Spleen (tissue), 13 donors: ENCODE measurements at regions of chr5 and their contacts with region 1.

Region 1: GRCh38 chr5:134101686-134102439 is 12.6 kb upstream of the TCF7 start:
- DNase-seq: peak; percentile 94
- H3K4me3 ChIP-seq: no peak overlapping the region
- H3K27ac ChIP-seq: peak overlapping the region in 4 of 8 donors; percentile 69 to 84 (median 80)
- H3K4me1 ChIP-seq: peaks cover 27 to 77% (median 52%) of the 10 kb centered on the region in 6 donors
- H3K27me3 ChIP-seq: no peaks in the 10 kb centered on the region
- CTCF ChIP-seq: peak; percentile 62 to 93 (median 88)
- POLR2A ChIP-seq: no peak

Region 2: DNA sequence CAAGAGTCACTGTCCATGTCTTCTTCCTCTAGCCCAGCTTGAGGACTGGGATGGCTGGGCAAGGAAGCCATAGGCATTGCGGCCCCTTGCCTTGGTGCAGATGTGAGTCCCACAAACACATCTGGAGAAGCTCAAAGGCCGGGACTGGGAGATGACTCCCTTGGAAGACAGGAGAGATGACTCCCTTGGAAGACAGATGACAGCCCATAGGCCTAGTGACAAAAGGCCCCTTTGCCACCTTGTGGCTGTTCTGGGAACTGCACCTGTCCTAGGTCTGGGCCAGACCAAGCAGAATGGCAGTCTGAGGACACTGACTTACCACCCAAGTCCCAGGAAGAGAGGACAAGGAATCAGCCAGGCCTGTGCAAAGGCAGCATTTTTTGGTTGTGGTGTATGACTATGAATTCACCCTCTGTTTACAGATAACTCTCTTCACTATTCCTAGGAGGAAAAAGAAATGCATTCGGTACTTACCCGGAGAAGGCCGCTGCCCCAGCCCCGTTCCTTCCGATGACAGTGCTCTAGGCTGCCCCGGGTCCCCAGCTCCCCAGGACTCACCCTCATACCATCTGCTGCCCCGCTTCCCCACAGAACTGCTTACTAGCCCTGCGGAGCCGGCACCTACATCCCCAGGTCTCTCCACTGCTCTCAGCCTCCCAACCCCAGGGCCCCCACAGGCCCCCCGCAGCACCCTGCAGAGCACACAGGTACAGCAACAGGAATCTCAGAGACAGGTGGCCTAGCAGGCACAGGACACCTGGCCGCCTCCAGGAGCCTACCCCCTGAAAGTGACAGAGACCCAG is 44.1 kb after region 1 on chr5:
- intact Hi-C with region 1: loop called (anchors 5 kb)
- DNase-seq: peak; percentile 91
- H3K4me3 ChIP-seq: no peak overlapping the region
- H3K27ac ChIP-seq: peak overlapping the region in 3 of 8 donors; percentile 12 to 52 (median 47)
- H3K4me1 ChIP-seq: peaks cover 3 to 58% (median 30%) of the 10 kb centered on the region in 6 donors
- H3K27me3 ChIP-seq: no peaks in the 10 kb centered on the region
- CTCF ChIP-seq: peak; percentile 91 to 98 (median 98)
- POLR2A ChIP-seq: no peak